Caco-2 (cell line): ENCODE measurements at regions of chr2 and their contacts with region 1.

Region 1: GRCh38 chr2:99066075-99066958 is 75.2 kb upstream of the C2orf15 start:
- DNase-seq: peak; percentile 43 to 44
- H3K4me3 ChIP-seq: no peak overlapping the region
- H3K4me3 Mint-ChIP-seq: no peak overlapping the region
- H3K27ac Mint-ChIP-seq: no peak overlapping the region
- H3K4me1 ChIP-seq: no peaks in the 10 kb centered on the region
- H3K4me1 Mint-ChIP-seq: no peaks in the 10 kb centered on the region
- H3K27me3 ChIP-seq: no peaks in the 10 kb centered on the region
- H3K27me3 Mint-ChIP-seq: no peaks in the 10 kb centered on the region
- CTCF ChIP-seq: peak; percentile 35 to 62

Region 2: GRCh38 chr2:98634401-98635092 is 431.8 kb before region 1 on chr2:
- CTCF ChIA-PET with region 1: interaction called, 3 read pairs
- POLR2A ChIA-PET with region 1: no interaction called
- intact Hi-C with region 1: loop called (anchors 5 kb)
- DNase-seq: peak in 1 of 2 experiments; percentile 28
- H3K4me3 ChIP-seq: no peak overlapping the region
- H3K4me3 Mint-ChIP-seq: no peak overlapping the region
- H3K27ac Mint-ChIP-seq: no peak overlapping the region
- H3K4me1 ChIP-seq: no peaks in the 10 kb centered on the region
- H3K4me1 Mint-ChIP-seq: no peaks in the 10 kb centered on the region
- H3K27me3 ChIP-seq: no peaks in the 10 kb centered on the region
- H3K27me3 Mint-ChIP-seq: no peaks in the 10 kb centered on the region
- CTCF ChIP-seq: peak; percentile 32 to 39

Region 3: DNA sequence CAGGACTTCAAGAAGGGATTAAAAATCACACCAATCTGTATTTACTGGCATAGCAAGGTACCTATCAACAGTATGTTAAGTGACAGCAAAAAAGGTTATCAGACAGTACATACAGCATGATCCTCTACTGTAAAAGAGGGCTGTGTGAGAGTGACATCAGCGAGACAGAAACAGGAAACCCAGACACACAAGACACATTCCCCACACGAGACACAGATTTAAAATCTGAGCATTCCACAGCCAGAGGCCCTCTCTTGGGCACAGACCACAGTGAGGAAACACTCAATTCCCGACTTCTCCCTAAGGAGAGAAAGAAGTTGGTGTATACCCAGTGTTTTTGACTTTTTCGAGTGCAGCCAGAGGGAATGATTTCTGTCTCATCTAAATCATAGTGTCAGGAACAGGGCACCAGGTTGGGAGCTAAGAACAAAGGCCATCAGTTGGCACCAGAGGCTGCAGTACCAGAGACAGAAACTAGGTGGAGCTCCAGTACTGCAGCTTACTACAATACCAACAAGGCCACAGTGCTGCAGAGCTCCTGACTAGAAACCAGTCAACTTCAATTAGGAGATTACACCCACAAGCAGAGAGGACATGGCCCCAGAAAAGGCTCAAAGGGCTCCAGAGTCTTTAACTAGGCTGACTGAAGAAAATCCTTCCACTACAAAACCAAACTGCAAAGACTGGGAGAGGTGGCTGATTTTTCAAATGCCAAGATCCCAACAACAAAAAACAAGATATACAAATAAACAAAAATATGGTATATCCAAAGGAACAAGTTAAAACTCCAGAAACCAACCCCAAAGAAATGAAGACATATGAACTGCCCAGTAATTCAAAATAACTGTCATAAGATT is 417.0 kb before region 1 on chr2:
- CTCF ChIA-PET with region 1: interaction called, 21 read pairs
- POLR2A ChIA-PET with region 1: no interaction called
- intact Hi-C with region 1: loop called (anchors 1 kb)
- DNase-seq: peak; percentile 82 to 84
- H3K4me3 ChIP-seq: no peak overlapping the region
- H3K4me3 Mint-ChIP-seq: no peak overlapping the region
- H3K27ac Mint-ChIP-seq: peak overlapping the region; percentile 4
- H3K4me1 ChIP-seq: no peaks in the 10 kb centered on the region
- H3K4me1 Mint-ChIP-seq: peaks cover 17% of the 10 kb centered on the region
- H3K27me3 ChIP-seq: no peaks in the 10 kb centered on the region
- H3K27me3 Mint-ChIP-seq: no peaks in the 10 kb centered on the region
- CTCF ChIP-seq: peak; percentile 95 to 98

Region 4: DNA sequence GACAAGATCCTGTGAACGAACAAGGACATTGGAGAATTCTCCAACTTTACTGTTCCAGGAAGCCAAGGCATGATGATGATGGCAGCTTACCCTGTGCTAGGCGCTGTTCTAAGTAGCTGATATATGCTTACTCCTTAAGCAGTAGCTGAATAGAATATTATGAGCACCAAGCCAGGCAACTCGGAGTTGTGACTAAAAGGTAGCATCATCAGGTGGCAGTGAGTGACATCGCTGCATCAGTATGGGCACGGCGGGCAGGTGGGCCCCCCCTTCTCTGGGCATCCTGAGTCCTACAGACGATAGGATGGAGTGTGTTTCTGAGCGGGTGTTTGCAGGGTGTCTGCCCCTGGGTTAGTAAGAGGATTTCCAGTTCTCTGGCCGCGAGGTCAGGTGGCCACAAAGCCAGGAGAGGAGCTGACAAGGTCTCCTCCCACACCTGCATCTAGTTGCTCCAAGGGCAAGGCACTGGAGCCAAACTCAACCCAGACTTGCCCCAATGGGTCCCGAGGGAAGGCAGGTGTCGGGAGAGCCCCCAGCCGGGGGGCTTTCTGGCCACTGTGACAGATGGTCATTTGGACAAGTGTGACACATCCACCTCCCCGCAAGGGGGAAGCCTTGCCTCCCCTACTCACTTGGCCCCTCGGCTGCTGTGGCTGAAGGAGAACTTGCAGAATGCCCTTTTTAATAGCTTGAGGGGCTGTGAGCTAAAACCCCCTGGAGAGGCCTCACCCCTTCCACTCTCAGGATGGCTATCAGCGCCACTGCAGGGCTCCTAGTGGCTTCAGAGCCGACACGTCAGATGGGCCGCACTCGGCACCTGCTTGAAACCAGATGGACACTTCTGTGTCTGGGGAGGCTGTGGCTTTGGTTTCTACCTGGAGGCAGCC is 185.8 kb before region 1 on chr2:
- CTCF ChIA-PET with region 1: interaction called, 8 read pairs
- POLR2A ChIA-PET with region 1: no interaction called
- intact Hi-C with region 1: loop called (anchors 1 kb)
- DNase-seq: no peak
- H3K4me3 ChIP-seq: no peak overlapping the region
- H3K4me3 Mint-ChIP-seq: no peak overlapping the region
- H3K27ac Mint-ChIP-seq: no peak overlapping the region
- H3K4me1 ChIP-seq: no peaks in the 10 kb centered on the region
- H3K4me1 Mint-ChIP-seq: no peaks in the 10 kb centered on the region
- H3K27me3 ChIP-seq: no peaks in the 10 kb centered on the region
- H3K27me3 Mint-ChIP-seq: no peaks in the 10 kb centered on the region
- CTCF ChIP-seq: no peak

Region 5: DNA sequence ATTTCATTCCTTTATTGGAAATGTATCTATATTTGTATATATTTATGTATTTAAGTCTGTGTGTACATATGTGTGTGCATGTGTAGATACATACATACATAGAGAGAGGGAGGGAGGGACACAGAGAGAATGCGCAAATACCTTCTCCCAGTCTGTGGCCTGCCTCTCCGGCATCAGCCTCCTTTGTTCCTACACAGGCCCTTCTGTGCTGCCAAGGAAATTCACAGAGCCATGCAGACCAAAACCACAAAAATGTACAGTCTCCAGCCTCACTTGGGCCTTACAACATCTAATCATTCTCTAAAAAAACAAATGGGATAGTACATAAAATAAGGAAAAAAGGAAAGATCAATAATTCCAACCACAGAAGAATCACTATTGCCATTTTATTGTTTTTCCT is 121.5 kb before region 1 on chr2:
- CTCF ChIA-PET with region 1: no interaction called
- POLR2A ChIA-PET with region 1: no interaction called
- intact Hi-C with region 1: loop called (anchors 10 kb)
- DNase-seq: no peak
- H3K4me3 ChIP-seq: no peak overlapping the region
- H3K4me3 Mint-ChIP-seq: no peak overlapping the region
- H3K27ac Mint-ChIP-seq: no peak overlapping the region
- H3K4me1 ChIP-seq: no peaks in the 10 kb centered on the region
- H3K4me1 Mint-ChIP-seq: no peaks in the 10 kb centered on the region
- H3K27me3 ChIP-seq: no peaks in the 10 kb centered on the region
- H3K27me3 Mint-ChIP-seq: peaks cover 8% of the 10 kb centered on the region
- CTCF ChIP-seq: no peak